ENCODE measurements at regions of chr1 and their contacts with region 1.

Region 1: GRCh38 chr1:16613185-16614147 is at the start of gene NBPF1:
- DNase-seq: peak; percentile 96 to 100
- H3K4me3 ChIP-seq: peak within 1 kb of the TSS; percentile 74
- CTCF ChIP-seq: peak in 2 of 3 donors; percentile 45 to 92
- POLR2A ChIP-seq: peak in 1 of 2 donors; percentile 79
- total RNA-seq, gene NBPF1: 8.2 to 19.8 (median 14.7) TPM

Region 2: GRCh38 chr1:16921391-16922185 is 308.1 kb after region 1 on chr1 and contains the start of gene CROCC:
- intact Hi-C with region 1: loop called (anchors 10 kb)
- DNase-seq: no peak
- H3K4me3 ChIP-seq: no peak within 1 kb of the TSS
- CTCF ChIP-seq: no peak
- POLR2A ChIP-seq: no peak
- total RNA-seq, gene CROCC: 19.5 to 63.8 (median 23.3) TPM

Measured in lower leg skin (tissue), 4 donors.